Right cardiac atrium (tissue), 5 donors: ENCODE measurements at regions of chr1 and their contacts with region 1.

Region 1: GRCh38 chr1:85580872-85581801 is 576 bp downstream of the CCN1 start:
- DNase-seq: peak; percentile 72 to 91 (median 88)
- ATAC-seq: peak; percentile 60 to 61
- H3K4me3 ChIP-seq: peak overlapping the region; percentile 60
- H3K27ac ChIP-seq: peak overlapping the region; percentile 96
- H3K4me1 ChIP-seq: peaks cover 6% of the 10 kb centered on the region
- H3K27me3 ChIP-seq: no peaks in the 10 kb centered on the region

Region 2: GRCh38 chr1:85427331-85427730 is 153.8 kb before region 1 on chr1:
- intact Hi-C with region 1: no loop called
- DNase-seq: no peak
- ATAC-seq: no peak
- H3K4me3 ChIP-seq: no peak overlapping the region
- H3K27ac ChIP-seq: no peak overlapping the region
- H3K4me1 ChIP-seq: no peaks in the 10 kb centered on the region
- H3K27me3 ChIP-seq: no peaks in the 10 kb centered on the region

Region 3: GRCh38 chr1:85494904-85495266 is 86.3 kb before region 1 on chr1:
- intact Hi-C with region 1: loop called in 1 of 4 experiments (anchors 2 kb)
- DNase-seq: peak in 1 of 3 donors; percentile 45
- ATAC-seq: no peak
- H3K4me3 ChIP-seq: no peak overlapping the region
- H3K27ac ChIP-seq: no peak overlapping the region
- H3K4me1 ChIP-seq: no peaks in the 10 kb centered on the region
- H3K27me3 ChIP-seq: no peaks in the 10 kb centered on the region

Region 4: GRCh38 chr1:85692730-85693314 is 111.7 kb after region 1 on chr1:
- intact Hi-C with region 1: loop called in 2 of 4 experiments (anchors 5 to 10 kb)
- DNase-seq: no peak
- ATAC-seq: no peak
- H3K4me3 ChIP-seq: no peak overlapping the region
- H3K27ac ChIP-seq: no peak overlapping the region
- H3K4me1 ChIP-seq: no peaks in the 10 kb centered on the region
- H3K27me3 ChIP-seq: no peaks in the 10 kb centered on the region

Region 5: DNA sequence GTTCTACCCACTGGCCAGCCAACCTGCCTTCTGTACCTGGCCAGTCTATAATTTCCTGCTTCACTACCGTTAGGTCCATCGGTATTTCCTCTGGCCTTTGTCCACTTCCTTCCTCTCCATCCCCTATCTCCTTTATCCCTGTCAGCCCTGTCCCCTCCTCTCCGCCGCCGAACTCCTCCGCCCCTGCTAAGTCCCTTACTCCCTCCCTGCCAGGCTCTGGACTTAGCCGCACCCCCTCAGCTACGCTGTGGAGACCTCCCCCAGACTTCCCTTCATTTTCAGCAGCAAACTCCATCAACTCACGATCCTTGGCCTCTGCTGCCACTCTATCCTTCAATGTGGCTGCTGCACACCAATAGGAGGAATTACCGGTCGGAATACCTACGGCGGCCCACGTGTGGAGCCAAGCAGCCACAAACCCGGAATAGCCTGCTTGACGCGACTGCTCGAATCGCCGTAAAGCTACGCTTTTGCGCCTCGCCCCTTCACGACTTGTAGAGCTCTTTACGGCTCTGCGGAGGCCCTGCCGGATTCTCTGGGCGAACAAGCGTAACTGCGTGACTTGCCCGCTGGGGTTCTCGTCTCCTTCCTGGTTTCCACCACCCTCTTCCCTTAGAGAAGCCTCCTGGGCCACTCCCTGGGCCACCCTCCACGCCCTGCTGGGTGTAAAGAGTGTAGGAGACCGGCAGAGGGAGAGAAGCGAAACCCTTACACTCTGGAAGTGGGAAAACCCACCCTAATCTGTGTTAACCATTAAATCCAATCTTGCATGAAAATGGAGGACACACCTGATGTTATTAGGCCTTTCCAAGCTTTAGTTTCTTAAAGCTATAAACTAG is 127.1 kb after region 1 on chr1 and contains the start of gene ZNHIT6:
- intact Hi-C with region 1: loop called in 1 of 4 experiments (anchors 10 kb)
- DNase-seq: peak; percentile 92 to 95 (median 95)
- ATAC-seq: peak; percentile 95 to 97
- H3K4me3 ChIP-seq: peak within 1 kb of the TSS; percentile 53
- H3K27ac ChIP-seq: peak within 1 kb of the TSS; percentile 74
- H3K4me1 ChIP-seq: no peaks in the 10 kb centered on the region
- H3K27me3 ChIP-seq: no peaks in the 10 kb centered on the region
- total RNA-seq, gene ZNHIT6: 10.2 to 13.7 (median 10.6) TPM

Region 6: DNA sequence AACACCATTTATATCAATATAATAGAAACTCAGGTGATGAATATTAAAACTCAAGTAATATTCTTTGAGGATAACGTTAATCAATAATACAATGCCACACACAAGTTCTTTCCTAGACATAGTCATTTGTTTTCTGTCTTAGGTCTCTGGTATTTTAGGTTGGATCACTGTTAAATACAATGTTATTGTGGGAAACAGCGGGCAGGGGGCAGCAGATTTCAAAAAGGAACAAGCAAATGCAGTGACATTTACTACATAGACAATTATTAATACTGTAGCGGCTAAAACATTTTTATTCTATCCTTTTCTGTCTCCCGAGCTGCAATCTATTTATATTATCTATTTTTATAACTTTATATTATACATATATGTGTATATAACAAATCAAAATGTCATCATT is 313.5 kb after region 1 on chr1:
- intact Hi-C with region 1: no loop called
- DNase-seq: peak; percentile 28 to 70 (median 44)
- ATAC-seq: no peak
- H3K4me3 ChIP-seq: no peak overlapping the region
- H3K27ac ChIP-seq: no peak overlapping the region
- H3K4me1 ChIP-seq: no peaks in the 10 kb centered on the region
- H3K27me3 ChIP-seq: no peaks in the 10 kb centered on the region